Heart left ventricle (tissue), 16 donors: ENCODE measurements at regions of chr5 and their contacts with region 1.

Region 1: GRCh38 chr5:156815988-156816599 is 34.0 kb upstream of the PPP1R2B start:
- DNase-seq: peak in 3 of 5 donors; percentile 11 to 61 (median 30)
- ATAC-seq: peak in 3 of 4 donors; percentile 44 to 71 (median 51)
- H3K4me3 ChIP-seq: no peak overlapping the region
- H3K27ac ChIP-seq: no peak overlapping the region
- H3K4me1 ChIP-seq: no peaks in the 10 kb centered on the region
- H3K27me3 ChIP-seq: no peaks in the 10 kb centered on the region
- CTCF ChIP-seq: peak in 11 of 12 donors; percentile 13 to 61 (median 45)
- POLR2A ChIP-seq: no peak

Region 2: GRCh38 chr5:155943516-155944407 is 872.3 kb before region 1 on chr5:
- intact Hi-C with region 1: loop called in 9 of 10 experiments (anchors 2 to 10 kb)
- DNase-seq: peak in 4 of 5 donors; percentile 28 to 50 (median 40)
- ATAC-seq: peak; percentile 64 to 93 (median 76)
- H3K4me3 ChIP-seq: no peak overlapping the region
- H3K27ac ChIP-seq: no peak overlapping the region
- H3K4me1 ChIP-seq: peaks cover 0 to 10% (median 0%) of the 10 kb centered on the region in 12 donors
- H3K27me3 ChIP-seq: no peaks in the 10 kb centered on the region
- CTCF ChIP-seq: peak; percentile 51 to 81 (median 72)
- POLR2A ChIP-seq: no peak

Region 3: DNA sequence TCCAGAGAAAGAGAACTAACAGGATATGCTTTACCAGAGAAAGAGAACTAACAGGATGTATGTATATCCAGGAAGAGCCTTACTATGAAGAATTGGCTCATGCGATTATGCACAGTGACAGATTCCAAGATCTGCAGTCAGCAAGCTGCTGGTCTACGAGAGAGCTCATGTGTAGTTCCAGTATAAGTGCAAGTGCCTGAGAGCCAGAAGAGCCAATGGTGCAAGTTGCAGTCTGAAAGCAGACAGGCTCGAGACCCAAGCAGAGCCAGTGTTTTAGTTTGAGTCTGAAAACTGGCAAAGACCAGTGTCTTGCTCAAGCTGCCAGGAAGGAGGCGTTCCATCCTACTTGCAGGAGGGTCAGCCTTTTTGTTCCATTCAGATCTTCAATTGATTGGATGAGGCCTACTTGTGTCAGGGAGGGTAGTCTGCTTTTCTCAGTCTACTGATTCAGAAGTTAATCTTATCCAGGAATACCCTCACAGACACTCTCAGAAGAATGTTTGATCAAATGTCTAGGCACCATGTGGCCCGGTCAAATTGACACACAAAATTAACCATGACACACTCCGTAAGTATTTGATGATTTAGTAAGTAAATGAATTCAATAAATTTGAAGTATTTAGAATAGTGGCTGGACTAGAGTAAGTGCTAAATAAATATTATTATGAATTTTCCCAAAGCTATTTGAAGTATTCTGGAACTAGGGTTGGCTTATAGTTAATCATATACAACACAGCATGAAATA is 861.2 kb before region 1 on chr5:
- intact Hi-C with region 1: loop called in 1 of 10 experiments (anchors 5 kb)
- DNase-seq: no peak
- ATAC-seq: no peak
- H3K4me3 ChIP-seq: no peak overlapping the region
- H3K27ac ChIP-seq: no peak overlapping the region
- H3K4me1 ChIP-seq: peaks cover 0 to 28% (median 8%) of the 10 kb centered on the region in 12 donors
- H3K27me3 ChIP-seq: no peaks in the 10 kb centered on the region
- CTCF ChIP-seq: no peak
- POLR2A ChIP-seq: no peak

Region 4: DNA sequence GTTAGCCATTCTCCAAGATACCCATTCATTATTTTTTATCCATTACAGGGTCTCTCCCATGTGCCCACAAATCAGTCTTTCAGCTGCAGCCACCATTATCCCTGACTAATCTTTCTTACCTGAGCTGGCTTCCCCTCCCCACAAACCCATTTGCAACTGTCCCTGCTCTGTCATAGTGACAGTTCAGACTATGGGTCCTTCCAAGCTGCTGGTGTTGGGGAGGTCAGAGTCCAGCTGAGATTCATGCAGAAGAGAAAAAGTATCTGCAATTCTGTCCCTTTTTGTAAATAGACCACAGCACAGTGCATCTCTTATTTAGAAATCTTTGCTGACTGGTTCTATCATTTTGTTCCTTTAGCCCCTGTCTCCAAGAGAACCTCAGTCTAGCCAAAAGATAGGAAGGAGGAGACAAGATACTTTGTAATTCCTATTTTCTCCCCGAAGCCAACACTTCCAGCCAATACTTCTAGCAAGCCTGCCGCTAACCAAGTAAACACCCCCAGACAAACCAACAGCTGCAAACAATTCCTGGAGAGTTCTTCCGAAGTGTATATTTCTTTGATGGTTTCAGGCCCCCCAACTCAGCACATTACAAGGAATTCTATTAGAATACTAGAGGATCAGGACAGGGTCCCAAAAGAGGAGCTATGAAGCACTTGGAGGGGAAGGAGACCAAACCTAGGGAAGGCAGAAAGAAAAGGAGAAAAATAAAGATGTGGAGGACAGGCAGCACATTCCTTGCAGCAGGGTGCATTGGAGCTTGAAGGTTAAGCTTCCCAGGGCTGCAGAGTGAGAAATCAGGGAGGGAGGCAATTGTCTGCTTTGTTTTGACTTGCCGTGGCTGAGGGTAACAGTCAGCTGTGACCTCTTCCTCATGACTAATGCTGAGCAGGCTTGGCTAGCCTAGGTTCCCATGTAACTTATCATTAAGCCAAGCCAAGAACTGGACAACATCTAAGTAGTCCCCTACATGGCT is 340.6 kb before region 1 on chr5:
- intact Hi-C with region 1: loop called in 1 of 10 experiments (anchors 10 kb)
- DNase-seq: peak in 4 of 5 donors; percentile 47 to 71 (median 56)
- ATAC-seq: peak; percentile 84 to 92 (median 84)
- H3K4me3 ChIP-seq: peak overlapping the region in 1 of 12 donors; percentile 20
- H3K27ac ChIP-seq: peak overlapping the region in 11 of 12 donors; percentile 12 to 72 (median 57)
- H3K4me1 ChIP-seq: peaks cover 0 to 55% (median 45%) of the 10 kb centered on the region in 12 donors
- H3K27me3 ChIP-seq: no peaks in the 10 kb centered on the region
- CTCF ChIP-seq: no peak
- POLR2A ChIP-seq: no peak

Region 5: DNA sequence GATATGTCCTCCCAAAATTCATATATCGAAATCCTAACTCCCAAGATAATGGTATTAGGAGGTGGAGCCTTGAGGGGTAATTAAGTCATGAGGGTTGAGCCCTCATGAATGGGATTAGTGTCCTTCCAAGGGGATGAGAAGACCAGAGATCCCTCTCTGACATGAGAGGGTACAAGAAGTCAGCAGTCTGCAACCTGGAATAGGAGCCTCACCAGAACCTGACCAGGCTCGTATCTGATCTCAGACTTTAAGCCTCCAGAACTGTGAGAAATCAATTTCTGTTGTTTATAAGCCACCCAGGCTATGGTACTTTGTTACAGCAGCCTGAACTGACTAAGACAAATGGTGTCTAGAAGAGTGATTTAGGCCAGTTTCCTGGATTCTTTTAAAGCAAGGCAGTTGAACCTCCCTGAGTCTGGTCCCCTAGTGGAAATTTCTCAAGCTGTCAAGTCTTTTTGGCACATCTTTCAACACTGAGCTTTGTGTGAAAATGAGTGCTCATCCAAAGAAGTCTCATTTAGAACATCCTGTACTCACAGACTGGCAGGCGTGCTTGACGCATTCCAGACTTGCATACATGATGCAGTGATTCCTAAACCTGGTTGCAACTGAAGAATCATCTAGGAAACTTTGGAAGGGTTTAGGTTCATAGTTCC is 220.8 kb before region 1 on chr5:
- intact Hi-C with region 1: loop called in 1 of 10 experiments (anchors 10 kb)
- DNase-seq: peak; percentile 40 to 89 (median 62)
- ATAC-seq: peak; percentile 93 to 97 (median 94)
- H3K4me3 ChIP-seq: no peak overlapping the region
- H3K27ac ChIP-seq: peak overlapping the region; percentile 52 to 88 (median 78)
- H3K4me1 ChIP-seq: peaks cover 0 to 31% (median 9%) of the 10 kb centered on the region in 12 donors
- H3K27me3 ChIP-seq: no peaks in the 10 kb centered on the region
- CTCF ChIP-seq: peak in 6 of 12 donors; percentile 6 to 29 (median 16)
- POLR2A ChIP-seq: no peak